ENCODE measurements at regions of chr10 and their contacts with region 1.

Region 1: GRCh38 chr10:78047314-78047891 is 13.7 kb downstream of the RPS24 start:
- DNase-seq: peak; percentile 87 to 92
- ATAC-seq: peak; percentile 75 to 89 (median 84)
- H3K4me3 ChIP-seq: no peak overlapping the region
- H3K27ac ChIP-seq: no peak overlapping the region
- H3K4me1 ChIP-seq: peaks cover 11% of the 10 kb centered on the region
- H3K27me3 ChIP-seq: no peaks in the 10 kb centered on the region
- CTCF ChIP-seq: peak; percentile 86

Region 2: DNA sequence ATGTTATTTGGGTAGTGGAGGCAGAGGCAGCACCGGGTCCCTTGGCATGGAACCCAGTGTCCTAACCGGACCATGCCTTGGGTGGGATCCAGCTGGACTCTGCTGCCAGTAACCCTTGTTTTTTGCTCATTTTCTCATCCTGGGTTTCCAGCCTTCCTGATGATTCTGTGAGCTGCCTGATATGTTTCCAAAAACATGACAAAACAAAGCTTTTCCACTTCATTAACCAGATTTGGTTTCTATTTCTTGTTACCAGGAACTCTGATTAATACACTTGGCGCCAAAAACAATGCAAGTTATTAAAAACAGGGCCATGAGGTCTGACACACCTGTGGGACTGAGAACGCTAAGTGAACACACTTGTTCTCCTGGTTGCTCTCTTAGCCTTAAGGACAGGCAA is 88.0 kb before region 1 on chr10:
- intact Hi-C with region 1: no loop called
- DNase-seq: no peak
- ATAC-seq: no peak
- H3K4me3 ChIP-seq: no peak overlapping the region
- H3K27ac ChIP-seq: no peak overlapping the region
- H3K4me1 ChIP-seq: no peaks in the 10 kb centered on the region
- H3K27me3 ChIP-seq: no peaks in the 10 kb centered on the region
- CTCF ChIP-seq: no peak

Region 3: DNA sequence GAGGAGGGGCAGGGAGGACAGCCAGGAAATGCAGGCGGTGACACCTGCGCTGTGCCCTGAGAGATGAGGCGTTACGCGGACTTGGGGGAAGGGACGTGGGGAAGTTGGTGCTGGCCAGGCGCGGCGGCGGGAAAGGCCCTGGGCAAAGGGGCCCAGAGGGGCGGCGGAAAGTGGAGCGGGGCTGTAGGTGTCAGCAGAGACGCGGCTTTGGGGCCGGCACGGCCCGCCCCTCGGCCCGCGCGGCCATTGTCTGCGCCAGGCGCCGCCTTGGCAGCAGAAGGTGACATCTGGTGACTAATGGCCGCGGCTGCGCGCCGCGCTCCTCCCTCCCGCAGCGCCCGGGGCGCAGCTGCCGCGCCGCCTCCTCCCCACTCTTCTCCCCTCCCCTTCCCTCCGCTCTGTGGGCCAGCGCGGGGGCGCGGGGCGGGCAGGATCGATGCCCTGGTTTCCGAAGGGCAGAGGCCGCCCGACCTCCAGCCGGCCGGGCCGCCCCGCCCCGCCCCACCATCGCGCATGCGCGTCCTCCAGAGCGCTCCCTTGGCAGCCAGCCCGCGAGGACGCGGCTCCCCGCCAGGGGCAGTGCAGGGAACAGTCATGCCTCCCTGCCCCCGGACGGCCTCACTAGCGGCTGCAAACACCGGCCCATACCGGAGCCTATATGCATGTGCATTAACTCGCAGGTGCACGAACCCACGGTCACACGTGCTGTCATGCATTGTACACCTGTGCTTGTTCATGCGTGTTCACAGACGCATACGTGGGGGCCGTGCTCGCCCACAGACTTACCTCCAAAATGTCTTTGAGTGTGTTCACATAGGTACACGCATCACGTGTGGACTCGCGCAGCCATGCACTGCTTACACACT is 255.8 kb after region 1 on chr10:
- intact Hi-C with region 1: loop called in 1 of 2 experiments (anchors 5 kb)
- DNase-seq: peak; percentile 96 to 97
- ATAC-seq: peak; percentile 94 to 96 (median 96)
- H3K4me3 ChIP-seq: peak overlapping the region; percentile 79
- H3K27ac ChIP-seq: peak overlapping the region; percentile 89
- H3K4me1 ChIP-seq: peaks cover 14% of the 10 kb centered on the region
- H3K27me3 ChIP-seq: no peaks in the 10 kb centered on the region
- CTCF ChIP-seq: peak; percentile 60

Region 4: DNA sequence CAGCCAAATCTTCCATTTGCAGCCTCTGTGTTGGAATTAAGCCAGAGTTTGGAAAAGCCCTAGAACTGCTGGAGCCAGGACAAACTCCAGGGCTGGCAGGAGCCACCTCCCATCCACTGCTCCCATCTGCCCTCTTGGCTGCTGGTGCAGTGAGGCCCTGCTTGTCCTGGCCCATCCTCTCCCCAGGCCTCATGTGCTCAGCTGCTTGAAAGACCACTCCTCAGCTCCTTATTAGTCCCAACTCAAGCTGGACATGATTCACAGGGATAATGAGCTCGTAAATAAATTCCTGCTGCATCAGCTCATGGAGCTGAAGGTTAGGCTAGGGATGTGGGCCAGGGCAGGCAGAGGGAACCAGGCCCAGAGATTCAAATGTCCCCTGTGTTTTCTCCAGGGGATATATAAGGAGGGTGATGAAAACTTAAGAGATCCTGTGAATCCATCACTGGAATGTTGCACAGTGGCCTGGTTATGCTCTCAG is 269.1 kb after region 1 on chr10:
- intact Hi-C with region 1: loop called in 1 of 2 experiments (anchors 5 kb)
- DNase-seq: no peak
- ATAC-seq: peak in 3 of 4 donors; percentile 43 to 65 (median 56)
- H3K4me3 ChIP-seq: no peak overlapping the region
- H3K27ac ChIP-seq: no peak overlapping the region
- H3K4me1 ChIP-seq: peaks cover 5% of the 10 kb centered on the region
- H3K27me3 ChIP-seq: no peaks in the 10 kb centered on the region
- CTCF ChIP-seq: no peak

Region 5: GRCh38 chr10:78650122-78650521 is 602.7 kb after region 1 on chr10:
- intact Hi-C with region 1: loop called in 1 of 2 experiments (anchors 5 kb)
- DNase-seq: no peak
- ATAC-seq: peak in 3 of 4 donors; percentile 63 to 75 (median 73)
- H3K4me3 ChIP-seq: no peak overlapping the region
- H3K27ac ChIP-seq: no peak overlapping the region
- H3K4me1 ChIP-seq: no peaks in the 10 kb centered on the region
- H3K27me3 ChIP-seq: peaks cover 0 to 11% (median 0%) of the 10 kb centered on the region in 3 donors
- CTCF ChIP-seq: no peak

Region 6: GRCh38 chr10:78657163-78657861 is 609.9 kb after region 1 on chr10:
- intact Hi-C with region 1: loop called (anchors 2 to 5 kb)
- DNase-seq: peak; percentile 76 to 87
- ATAC-seq: peak; percentile 89 to 97 (median 96)
- H3K4me3 ChIP-seq: no peak overlapping the region
- H3K27ac ChIP-seq: no peak overlapping the region
- H3K4me1 ChIP-seq: no peaks in the 10 kb centered on the region
- H3K27me3 ChIP-seq: peaks cover 0 to 11% (median 0%) of the 10 kb centered on the region in 3 donors
- CTCF ChIP-seq: peak; percentile 73

Measured in psoas muscle (tissue), 8 donors.